Breast epithelium (tissue), 4 donors: ENCODE measurements at regions of chr5 and their contacts with region 1.

Region 1: DNA sequence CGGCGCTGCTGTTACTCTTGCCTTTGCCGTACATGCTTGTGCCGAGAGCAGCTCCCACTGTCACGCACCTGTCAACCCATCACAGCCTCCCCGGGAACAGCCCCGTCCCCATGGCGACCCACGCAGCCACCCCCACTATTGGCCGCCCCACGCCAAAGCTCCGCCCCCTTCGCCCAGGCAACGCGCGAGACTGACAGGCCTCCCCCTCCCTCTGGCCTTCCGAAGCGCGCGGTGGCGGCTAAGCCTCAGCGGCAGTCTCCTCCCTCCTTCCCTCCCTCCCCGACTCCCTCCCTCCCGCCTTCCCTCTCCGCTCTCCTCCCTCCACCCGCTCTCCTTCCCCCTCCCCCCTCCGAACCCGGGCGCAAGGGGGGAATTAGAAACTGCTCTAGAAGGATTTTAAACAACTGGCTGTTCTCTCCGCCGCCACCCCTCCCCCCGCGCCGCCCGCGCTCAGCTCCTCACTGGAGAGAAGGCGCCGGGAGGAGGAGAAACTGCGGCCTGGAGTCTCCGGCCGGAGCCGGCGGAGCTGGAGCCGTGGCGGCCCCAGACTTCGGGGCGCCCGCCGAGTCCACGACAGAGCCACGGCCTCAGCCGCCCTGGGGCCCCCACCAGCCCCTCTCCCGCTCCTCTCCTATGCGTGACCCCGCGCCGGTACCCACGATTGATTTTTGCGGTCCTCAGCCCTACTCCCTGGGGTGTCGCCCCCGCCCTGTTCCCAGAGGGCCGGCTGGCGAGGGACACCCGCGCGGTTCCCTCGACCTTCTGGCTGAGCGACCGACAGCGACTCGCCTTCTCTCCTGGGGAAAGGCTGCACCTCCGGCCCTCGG is at the start of gene SSBP2:
- DNase-seq: peak; percentile 99 to 100
- H3K4me3 ChIP-seq: peak within 1 kb of the TSS; percentile 79 to 94 (median 92)
- H3K27ac ChIP-seq: peak within 1 kb of the TSS; percentile 98 to 99
- H3K4me1 ChIP-seq: peaks cover 0 to 7% of the 10 kb centered on the region in 2 donors
- H3K27me3 ChIP-seq: no peaks in the 10 kb centered on the region
- CTCF ChIP-seq: peak in 2 of 3 donors; percentile 8 to 14
- POLR2A ChIP-seq: peak; percentile 50
- total RNA-seq, gene SSBP2: 65.5 to 110 (median 76.6) TPM

Region 2: DNA sequence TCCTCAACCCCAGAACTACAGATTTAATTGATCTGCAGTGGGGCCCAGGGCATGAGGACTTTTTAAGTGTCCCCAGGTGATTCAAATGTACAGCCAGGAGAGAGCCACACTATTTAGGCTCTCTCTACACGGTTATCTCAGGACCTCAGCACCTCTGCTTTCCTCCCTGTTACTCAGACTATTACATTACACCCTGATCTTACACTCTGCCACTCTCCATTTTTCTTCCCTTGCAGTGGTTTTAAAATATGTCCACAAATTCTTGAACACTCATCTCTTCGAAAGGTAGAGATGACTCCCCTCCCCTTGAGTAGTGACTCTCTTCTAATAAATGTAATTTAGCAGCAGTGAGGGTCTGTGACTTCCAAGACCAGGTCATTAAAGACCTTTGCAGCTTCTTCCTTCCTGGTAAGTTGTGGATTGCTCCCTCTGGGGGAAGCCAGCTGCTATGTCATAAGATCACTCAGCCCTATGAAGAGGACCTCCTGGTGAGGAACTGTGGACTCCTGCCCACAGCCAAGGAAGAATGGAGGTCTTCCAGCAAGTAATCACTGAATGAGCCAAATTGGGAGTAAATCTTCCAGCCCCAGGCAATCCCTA is 87.2 kb after region 1 on chr5:
- intact Hi-C with region 1: loop called (anchors 5 kb)
- DNase-seq: no peak
- H3K4me3 ChIP-seq: no peak overlapping the region
- H3K27ac ChIP-seq: no peak overlapping the region
- H3K4me1 ChIP-seq: no peaks in the 10 kb centered on the region
- H3K27me3 ChIP-seq: no peaks in the 10 kb centered on the region
- CTCF ChIP-seq: peak in 2 of 3 donors; percentile 25 to 36
- POLR2A ChIP-seq: no peak

Region 3: DNA sequence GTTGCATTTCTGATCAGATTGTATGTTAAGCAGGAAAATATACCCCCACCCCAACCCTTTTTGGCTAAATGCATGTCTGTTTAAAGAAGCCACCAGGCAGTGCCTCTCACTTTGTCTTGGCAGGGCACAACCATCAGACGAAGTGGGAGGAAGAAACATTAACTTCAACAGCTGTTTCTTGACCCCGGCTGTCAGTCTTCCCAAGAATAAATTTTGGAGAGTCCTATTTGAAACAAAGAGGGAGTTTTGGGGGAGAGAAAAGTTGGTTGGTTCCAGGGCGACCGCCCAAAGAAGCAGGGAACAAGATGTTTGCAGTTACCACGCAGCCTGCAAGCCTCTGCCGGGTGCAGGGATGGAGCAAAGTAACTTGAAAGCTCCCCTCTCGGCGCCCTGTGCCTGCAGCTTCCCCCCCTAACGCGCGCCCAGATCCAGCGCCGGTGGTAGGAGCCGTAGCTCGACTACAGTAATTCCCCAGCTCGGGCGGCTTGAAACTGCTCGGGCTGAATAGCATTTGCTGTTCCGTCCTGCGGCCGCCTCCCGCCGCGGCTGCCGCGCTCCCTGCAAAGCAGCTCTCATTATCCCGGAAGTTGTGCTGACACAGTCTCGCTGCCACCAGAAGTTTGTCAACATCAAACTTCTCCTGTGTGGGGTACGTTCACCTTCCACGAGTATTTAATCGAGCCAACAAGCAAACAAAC is 100.4 kb after region 1 on chr5:
- intact Hi-C with region 1: loop called (anchors 5 kb)
- DNase-seq: peak; percentile 92 to 93
- H3K4me3 ChIP-seq: peak overlapping the region; percentile 48 to 74 (median 55)
- H3K27ac ChIP-seq: peak overlapping the region; percentile 90 to 93
- H3K4me1 ChIP-seq: peaks cover 14 to 20% of the 10 kb centered on the region in 2 donors
- H3K27me3 ChIP-seq: no peaks in the 10 kb centered on the region
- CTCF ChIP-seq: peak in 1 of 3 donors; percentile 27
- POLR2A ChIP-seq: peak; percentile 30

Region 4: DNA sequence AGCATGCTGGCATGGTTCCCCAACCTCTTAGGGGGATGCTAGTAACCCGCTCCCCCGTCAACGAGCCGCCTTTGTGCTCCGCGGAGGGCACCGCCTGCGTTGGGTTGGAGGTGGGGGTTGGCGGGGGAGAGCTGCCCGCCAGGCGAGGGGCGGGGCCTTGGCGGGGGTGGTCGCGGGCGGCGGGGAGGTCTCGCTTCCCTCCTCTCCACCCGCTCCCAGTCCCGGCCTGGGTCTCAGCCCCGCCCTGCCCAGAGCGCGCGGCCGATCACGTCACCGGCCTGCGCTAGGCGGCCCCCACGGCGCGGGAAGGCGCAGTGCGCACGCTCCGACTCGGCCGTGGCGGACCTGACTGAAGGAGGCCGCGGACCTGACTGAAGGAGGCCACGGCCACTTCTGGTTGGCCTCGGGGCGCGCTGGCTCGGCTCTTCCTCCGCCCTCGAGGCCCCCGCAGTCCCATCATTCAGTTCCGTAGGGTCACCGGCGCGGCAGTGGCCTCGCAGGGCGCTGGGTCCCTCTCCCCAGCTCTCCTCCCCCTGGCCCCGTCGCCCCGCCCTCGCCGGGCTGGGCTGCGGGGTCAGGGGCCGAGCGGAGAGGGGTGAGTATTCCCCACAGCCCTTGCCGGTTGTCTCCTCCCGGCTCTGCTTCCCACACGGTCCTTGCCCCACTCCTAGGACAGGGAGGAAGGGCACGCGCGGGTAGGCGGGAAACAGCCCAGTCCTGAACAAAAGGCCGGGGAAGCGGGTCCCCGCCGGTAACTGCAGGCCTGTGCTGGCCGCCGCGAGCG is 220.7 kb after region 1 on chr5 and contains the start of gene ATG10:
- intact Hi-C with region 1: loop called (anchors 5 kb)
- DNase-seq: peak; percentile 87
- H3K4me3 ChIP-seq: peak within 1 kb of the TSS; percentile 68 to 77 (median 74)
- H3K27ac ChIP-seq: peak within 1 kb of the TSS; percentile 99 to 100
- H3K4me1 ChIP-seq: no peaks in the 10 kb centered on the region
- H3K27me3 ChIP-seq: no peaks in the 10 kb centered on the region
- CTCF ChIP-seq: no peak
- POLR2A ChIP-seq: peak; percentile 95
- total RNA-seq, gene ATG10: 5.2 to 9.2 (median 6.6) TPM